Activated CD8-positive, alpha-beta T cell treated with anti-CD3 and anti-CD28 coated beads, Interleukin-2, amount 10 ng/mL, durations not matched to agents 7 days and 5 days (primary cell): ENCODE measurements at regions of chr5 and their contacts with region 1.

Region 1: GRCh38 chr5:175534070-175534932 is 55.9 kb downstream of the SFXN1 start:
- DNase-seq: peak; percentile 89
- ATAC-seq: peak; percentile 99
- H3K4me3 Mint-ChIP-seq: peak overlapping the region; percentile 9
- H3K27ac Mint-ChIP-seq: no peak overlapping the region
- H3K4me1 Mint-ChIP-seq: peaks cover 52% of the 10 kb centered on the region
- H3K27me3 Mint-ChIP-seq: no peaks in the 10 kb centered on the region

Region 2: DNA sequence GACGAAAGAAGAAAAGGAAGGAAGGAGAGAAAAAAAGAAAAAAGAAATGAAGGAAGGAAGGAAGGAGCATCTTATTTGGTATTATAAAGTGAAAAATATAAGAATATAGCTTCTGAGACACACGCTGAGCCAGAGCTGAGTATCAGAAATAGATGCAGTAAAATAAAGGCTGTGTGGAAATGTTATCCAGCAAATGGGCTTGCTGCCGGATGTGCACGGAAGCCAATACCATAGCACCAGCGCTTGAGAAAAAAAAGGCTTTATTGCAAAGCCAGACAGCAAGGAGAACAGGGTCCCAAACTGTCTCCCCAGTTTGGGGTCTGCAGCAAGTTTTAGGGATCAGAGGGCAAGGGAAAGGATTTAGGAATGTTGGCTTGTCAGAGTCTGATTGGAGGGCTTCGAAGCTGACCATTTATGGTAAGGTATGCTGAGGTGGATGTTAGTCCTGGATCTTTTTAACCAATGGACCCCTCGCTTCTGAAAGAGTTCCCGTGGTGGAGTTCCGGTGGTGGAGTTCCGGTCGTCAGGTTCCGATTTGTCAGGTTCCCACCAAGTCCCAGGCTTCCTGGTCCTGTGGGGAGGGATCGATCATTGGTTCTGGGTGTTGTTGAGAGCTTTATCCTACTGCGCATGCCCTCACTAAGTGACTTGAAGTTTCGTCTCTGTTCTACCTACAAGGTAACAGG is 14.5 kb after region 1 on chr5:
- CTCF ChIA-PET with region 1: interaction called, 31 read pairs
- POLR2A ChIA-PET with region 1: no interaction called
- DNase-seq: no peak
- ATAC-seq: no peak
- H3K4me3 Mint-ChIP-seq: no peak overlapping the region
- H3K27ac Mint-ChIP-seq: no peak overlapping the region
- H3K4me1 Mint-ChIP-seq: peaks cover 4% of the 10 kb centered on the region
- H3K27me3 Mint-ChIP-seq: peaks cover 37% of the 10 kb centered on the region

Region 3: DNA sequence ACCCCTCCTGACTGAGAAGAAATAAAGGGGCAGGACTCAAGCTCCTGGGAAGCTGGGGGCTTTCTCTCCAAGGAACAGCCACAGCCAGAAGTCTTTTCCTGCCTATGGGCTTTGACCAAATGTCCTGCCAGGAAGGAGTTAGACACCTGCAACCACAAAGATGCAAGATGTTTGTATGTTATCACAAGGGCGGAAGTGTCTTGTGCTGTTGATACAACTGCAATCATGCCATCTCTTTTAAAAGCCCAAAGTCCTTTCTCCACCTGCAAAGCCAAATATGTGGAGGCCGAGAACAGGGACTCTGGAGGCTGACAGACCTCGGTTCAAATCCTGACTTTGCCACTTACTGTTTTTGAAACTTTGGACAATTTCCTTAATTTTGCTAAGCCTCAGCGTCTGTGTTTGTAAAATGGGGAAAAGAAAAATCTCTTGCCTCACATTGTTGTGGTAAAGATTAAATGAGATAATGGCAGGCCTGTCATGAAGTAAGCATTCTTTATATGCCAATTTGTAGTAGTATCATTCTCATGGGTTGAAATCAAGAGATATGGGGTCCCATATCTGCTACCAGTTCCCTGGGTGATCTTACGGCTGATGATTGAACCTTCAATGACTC is 140.5 kb after region 1 on chr5:
- CTCF ChIA-PET with region 1: interaction called, 30 read pairs
- POLR2A ChIA-PET with region 1: no interaction called
- DNase-seq: no peak
- ATAC-seq: no peak
- H3K4me3 Mint-ChIP-seq: no peak overlapping the region
- H3K27ac Mint-ChIP-seq: no peak overlapping the region
- H3K4me1 Mint-ChIP-seq: peaks cover 87% of the 10 kb centered on the region
- H3K27me3 Mint-ChIP-seq: no peaks in the 10 kb centered on the region

Region 4: GRCh38 chr5:175696139-175696854 is 162.0 kb after region 1 on chr5:
- CTCF ChIA-PET with region 1: interaction called, 109 read pairs
- POLR2A ChIA-PET with region 1: no interaction called
- DNase-seq: peak; percentile 85
- ATAC-seq: peak; percentile 87
- H3K4me3 Mint-ChIP-seq: peak overlapping the region; percentile 49
- H3K27ac Mint-ChIP-seq: peak overlapping the region; percentile 73
- H3K4me1 Mint-ChIP-seq: peaks cover 50% of the 10 kb centered on the region
- H3K27me3 Mint-ChIP-seq: no peaks in the 10 kb centered on the region

Region 5: DNA sequence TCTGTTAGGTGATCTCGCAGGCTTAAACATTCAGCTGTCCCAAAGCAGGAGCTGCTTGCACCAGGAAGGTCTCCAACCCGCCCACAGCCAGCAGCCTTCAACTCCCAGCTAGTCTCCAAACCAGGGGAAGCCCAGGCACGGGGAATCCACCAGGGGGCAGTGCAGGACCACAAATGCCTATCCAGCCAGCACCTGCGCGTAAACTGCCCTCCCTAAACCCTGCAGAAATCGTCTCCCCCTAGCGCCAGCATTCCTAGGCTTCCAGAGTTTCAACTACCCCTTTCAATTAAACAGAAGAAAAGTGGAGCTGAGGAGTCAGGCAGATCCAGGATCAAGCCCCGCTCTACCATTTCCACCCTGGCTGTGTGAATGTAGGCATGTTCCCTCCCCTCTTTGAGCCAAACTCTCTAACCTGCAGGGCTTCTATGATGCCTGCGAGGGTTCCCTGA is 195.6 kb after region 1 on chr5:
- CTCF ChIA-PET with region 1: interaction called, 33 read pairs
- POLR2A ChIA-PET with region 1: no interaction called
- DNase-seq: peak; percentile 92
- ATAC-seq: peak; percentile 96
- H3K4me3 Mint-ChIP-seq: no peak overlapping the region
- H3K27ac Mint-ChIP-seq: no peak overlapping the region
- H3K4me1 Mint-ChIP-seq: peaks cover 6% of the 10 kb centered on the region
- H3K27me3 Mint-ChIP-seq: peaks cover 11% of the 10 kb centered on the region